IMR-90 (cell line): ENCODE measurements at regions of chr2 and their contacts with region 1.

Region 1: GRCh38 chr2:38835015-38835601 is 40.6 kb downstream of the DHX57 start:
- DNase-seq: peak; percentile 28
- ATAC-seq: no peak; the same call in 1 of the 2 replicates
- H3K4me3 ChIP-seq: no peak overlapping the region
- H3K27ac ChIP-seq: no peak overlapping the region
- H3K4me1 ChIP-seq: no peaks in the 10 kb centered on the region
- H3K27me3 ChIP-seq: no peaks in the 10 kb centered on the region
- CTCF ChIP-seq: peak; percentile 50
- POLR2A ChIP-seq: no peak
- RAD21 ChIP-seq: peak; percentile 40

Region 2: GRCh38 chr2:38535744-38536506 is 299.2 kb before region 1 on chr2:
- CTCF ChIA-PET with region 1: no interaction called
- POLR2A ChIA-PET with region 1: no interaction called
- dilution Hi-C with region 1: no loop called
- in situ Hi-C with region 1: no loop called
- intact Hi-C with region 1: loop called (anchors 10 kb)
- DNase-seq: peak; percentile 46
- ATAC-seq: peak; percentile 94
- H3K4me3 ChIP-seq: peak overlapping the region; percentile 51
- H3K27ac ChIP-seq: no peak overlapping the region; the same call in 1 of the 2 replicates
- H3K4me1 ChIP-seq: no peaks in the 10 kb centered on the region
- H3K27me3 ChIP-seq: peaks cover 10% of the 10 kb centered on the region; the same call in 1 of the 2 replicates
- CTCF ChIP-seq: peak; percentile 80
- POLR2A ChIP-seq: no peak
- RAD21 ChIP-seq: peak; percentile 71

Region 3: GRCh38 chr2:38750891-38751595 is 84.1 kb before region 1 on chr2 and contains the start of gene SRSF7:
- CTCF ChIA-PET with region 1: no interaction called
- POLR2A ChIA-PET with region 1: no interaction called
- dilution Hi-C with region 1: no loop called
- in situ Hi-C with region 1: no loop called
- intact Hi-C with region 1: loop called (anchors 1 kb)
- DNase-seq: peak; percentile 99
- ATAC-seq: peak; percentile 81
- H3K4me3 ChIP-seq: peak within 1 kb of the TSS; percentile 89
- H3K27ac ChIP-seq: peak within 1 kb of the TSS; percentile 96
- H3K4me1 ChIP-seq: peaks cover 3% of the 10 kb centered on the region; the same call in 1 of the 2 replicates
- H3K27me3 ChIP-seq: no peaks in the 10 kb centered on the region
- CTCF ChIP-seq: no peak
- POLR2A ChIP-seq: peak; percentile 100
- RAD21 ChIP-seq: no peak; the same call in 1 of the 2 replicates
- total RNA-seq, gene SRSF7: 148 and 260 TPM in 2 replicates

Region 4: GRCh38 chr2:38892819-38893218 is 57.7 kb after region 1 on chr2:
- CTCF ChIA-PET with region 1: no interaction called
- POLR2A ChIA-PET with region 1: no interaction called
- dilution Hi-C with region 1: no loop called
- in situ Hi-C with region 1: no loop called
- intact Hi-C with region 1: no loop called
- DNase-seq: peak; percentile 34
- ATAC-seq: peak; percentile 57
- H3K4me3 ChIP-seq: no peak overlapping the region
- H3K27ac ChIP-seq: no peak overlapping the region
- H3K4me1 ChIP-seq: no peaks in the 10 kb centered on the region
- H3K27me3 ChIP-seq: no peaks in the 10 kb centered on the region
- CTCF ChIP-seq: no peak
- POLR2A ChIP-seq: no peak
- RAD21 ChIP-seq: no peak